ENCODE measurements at regions of chrX and their contacts with region 1.

Region 1: DNA sequence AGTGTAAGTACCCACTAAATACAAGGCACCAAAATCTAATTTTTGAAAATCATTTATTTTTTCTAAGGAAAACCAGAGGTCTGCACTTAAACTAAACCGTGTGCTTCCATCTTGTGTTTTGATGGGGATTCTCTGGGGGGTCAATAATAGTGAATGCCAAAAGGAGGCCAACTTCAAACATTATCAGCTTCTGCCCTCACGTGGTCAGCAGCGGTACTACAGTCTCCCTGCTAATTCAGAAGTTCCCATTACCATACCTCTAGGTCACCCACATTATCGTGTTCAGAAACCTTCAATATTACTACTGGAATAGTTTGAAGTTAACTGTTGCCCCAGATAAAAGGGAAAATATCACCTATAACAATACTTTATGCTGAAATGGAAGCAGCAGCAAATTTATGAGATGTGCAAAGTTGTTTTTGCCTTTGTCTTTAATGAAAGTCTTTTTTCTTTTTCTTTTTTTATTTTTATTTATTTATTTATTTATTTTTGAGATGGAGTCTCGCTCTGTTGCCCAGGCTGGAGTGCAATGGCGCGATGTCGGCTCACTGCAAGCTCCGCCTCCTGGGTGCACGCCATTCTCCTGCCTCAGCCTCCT is 17.3 kb downstream of the CTPS2 start:
- DNase-seq: no peak
- ATAC-seq: peak; percentile 92
- H3K4me3 ChIP-seq: no peak overlapping the region
- H3K27ac ChIP-seq: no peak overlapping the region
- H3K4me1 ChIP-seq: no peaks in the 10 kb centered on the region
- H3K27me3 ChIP-seq: no peaks in the 10 kb centered on the region
- CTCF ChIP-seq: peak; percentile 85 to 92 (median 92)
- EP300 ChIP-seq: no peak
- POLR2A ChIP-seq: no peak
- RAD21 ChIP-seq: peak; percentile 74

Region 2: GRCh38 chrX:15493118-15493962 is 1201.8 kb before region 1 on chrX and contains the start of gene PIR:
- CTCF ChIA-PET with region 1: no interaction called
- POLR2A ChIA-PET with region 1: no interaction called
- RAD21 ChIA-PET with region 1: no interaction called
- SMC1A ChIA-PET with region 1: no interaction called
- in situ Hi-C with region 1: no loop called
- intact Hi-C with region 1: loop called (anchors 5 kb)
- DNase-seq: peak; percentile 17
- ATAC-seq: peak; percentile 97
- H3K4me3 ChIP-seq: peak within 1 kb of the TSS; percentile 48
- H3K27ac ChIP-seq: peak within 1 kb of the TSS; percentile 52
- H3K4me1 ChIP-seq: no peaks in the 10 kb centered on the region
- H3K27me3 ChIP-seq: no peaks in the 10 kb centered on the region
- CTCF ChIP-seq: peak; percentile 31 to 41 (median 38); a peak in 4 of 6 replicates
- EP300 ChIP-seq: no peak
- POLR2A ChIP-seq: peak; percentile 68
- RAD21 ChIP-seq: no peak
- polyA plus RNA-seq, gene PIR: 10.4 to 10.9 TPM

Region 3: GRCh38 chrX:15680401-15680800 is 1014.8 kb before region 1 on chrX:
- CTCF ChIA-PET with region 1: no interaction called
- POLR2A ChIA-PET with region 1: no interaction called
- RAD21 ChIA-PET with region 1: no interaction called
- SMC1A ChIA-PET with region 1: no interaction called
- in situ Hi-C with region 1: loop called (anchors 10 kb)
- intact Hi-C with region 1: loop called (anchors 5 kb)
- DNase-seq: no peak
- ATAC-seq: peak; percentile 79
- H3K4me3 ChIP-seq: no peak overlapping the region
- H3K27ac ChIP-seq: peak overlapping the region; percentile 11; the same call in 1 of the 2 replicates
- H3K4me1 ChIP-seq: peaks cover 20% of the 10 kb centered on the region
- H3K27me3 ChIP-seq: no peaks in the 10 kb centered on the region
- CTCF ChIP-seq: no peak
- EP300 ChIP-seq: no peak
- POLR2A ChIP-seq: no peak
- RAD21 ChIP-seq: no peak

Region 4: DNA sequence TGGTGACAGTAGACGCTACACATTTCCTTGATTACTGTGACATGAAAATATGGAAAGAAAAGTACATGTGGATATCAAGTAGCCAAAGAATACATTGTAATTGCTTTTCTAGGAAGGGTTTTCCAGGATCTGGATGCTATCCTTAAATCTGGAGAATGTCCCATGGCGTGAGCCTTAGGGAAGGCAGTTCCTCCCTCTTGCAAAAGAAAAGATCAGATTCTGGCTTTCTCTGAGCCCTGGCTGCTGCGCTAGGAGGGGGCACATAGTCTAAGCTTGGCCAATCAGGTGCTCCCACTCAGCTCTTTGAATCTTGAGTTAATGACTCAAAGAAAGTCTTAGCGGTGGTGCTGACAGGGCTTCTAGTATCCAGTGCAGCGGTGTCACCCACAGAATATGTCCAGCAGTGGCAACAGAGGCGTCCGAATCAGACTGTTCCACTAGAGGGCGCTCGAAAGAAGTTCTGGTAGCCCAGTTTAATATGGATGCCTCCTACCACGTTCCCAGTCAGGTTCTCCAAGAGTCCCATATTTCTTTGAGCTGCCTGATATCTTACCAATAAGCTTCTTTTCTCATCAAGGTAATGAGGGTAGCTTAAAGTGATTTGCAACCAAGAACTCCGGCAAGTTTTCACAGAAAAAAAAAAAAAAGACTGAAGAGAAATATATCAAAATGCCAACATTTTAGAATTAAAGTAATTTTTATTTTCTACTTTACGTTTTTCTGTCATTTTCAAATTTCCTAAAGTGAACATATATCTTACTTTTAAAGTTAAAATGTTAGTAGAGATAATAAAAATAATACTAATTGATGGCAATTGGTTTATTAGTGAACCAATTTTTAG is 258.6 kb before region 1 on chrX:
- CTCF ChIA-PET with region 1: interaction called, 3 read pairs
- POLR2A ChIA-PET with region 1: no interaction called
- RAD21 ChIA-PET with region 1: interaction called, 3 read pairs
- SMC1A ChIA-PET with region 1: no interaction called
- in situ Hi-C with region 1: no loop called
- intact Hi-C with region 1: loop called (anchors 1 kb)
- DNase-seq: peak; percentile 5
- ATAC-seq: peak; percentile 94
- H3K4me3 ChIP-seq: no peak overlapping the region
- H3K27ac ChIP-seq: no peak overlapping the region
- H3K4me1 ChIP-seq: no peaks in the 10 kb centered on the region
- H3K27me3 ChIP-seq: no peaks in the 10 kb centered on the region; a peak in 1 of 4 replicates
- CTCF ChIP-seq: peak; percentile 61 to 67 (median 63)
- EP300 ChIP-seq: no peak
- POLR2A ChIP-seq: no peak
- RAD21 ChIP-seq: no peak; the same call in 1 of the 2 replicates

Region 5: GRCh38 chrX:16560173-16560572 is 135.0 kb before region 1 on chrX:
- CTCF ChIA-PET with region 1: no interaction called
- POLR2A ChIA-PET with region 1: no interaction called
- RAD21 ChIA-PET with region 1: no interaction called
- SMC1A ChIA-PET with region 1: no interaction called
- in situ Hi-C with region 1: no loop called
- intact Hi-C with region 1: no loop called
- DNase-seq: no peak
- ATAC-seq: no peak
- H3K4me3 ChIP-seq: no peak overlapping the region
- H3K27ac ChIP-seq: no peak overlapping the region
- H3K4me1 ChIP-seq: no peaks in the 10 kb centered on the region
- H3K27me3 ChIP-seq: no peaks in the 10 kb centered on the region; a peak in 1 of 4 replicates
- CTCF ChIP-seq: no peak
- EP300 ChIP-seq: no peak
- POLR2A ChIP-seq: no peak
- RAD21 ChIP-seq: no peak

Region 6: DNA sequence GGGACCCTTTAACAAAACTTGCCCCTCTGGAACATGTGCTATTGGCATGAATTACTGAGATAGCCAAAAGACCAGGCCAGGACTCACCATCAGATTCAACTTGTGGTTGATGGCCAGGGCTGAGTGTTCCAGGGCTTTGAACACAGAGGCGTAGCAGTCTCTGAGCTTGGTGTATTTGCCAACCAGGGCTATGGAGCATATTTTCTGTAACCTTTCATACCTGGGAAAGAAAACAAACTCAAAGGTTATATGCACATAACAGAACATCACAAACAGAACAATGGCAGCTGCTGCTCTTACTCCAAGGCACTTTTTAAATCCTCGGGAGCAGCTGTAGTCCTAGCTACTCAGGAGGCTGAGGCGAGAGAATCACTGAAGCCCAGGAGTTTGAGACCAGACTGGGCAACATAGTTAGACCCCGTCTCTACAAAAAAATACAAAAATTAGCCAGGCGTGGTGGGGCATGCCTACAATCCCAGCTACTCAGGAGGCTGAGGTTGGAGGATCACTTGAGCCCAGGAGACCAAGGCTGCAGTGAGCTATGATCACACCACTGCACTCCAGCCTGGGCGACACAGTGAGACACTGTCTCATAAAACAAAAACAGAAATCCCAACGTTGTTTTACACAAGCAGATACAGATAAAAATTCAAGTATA is 12.0 kb before region 1 on chrX:
- CTCF ChIA-PET with region 1: interaction called, 19 read pairs
- POLR2A ChIA-PET with region 1: interaction called, 3 read pairs
- RAD21 ChIA-PET with region 1: no interaction called
- SMC1A ChIA-PET with region 1: interaction called, 4 read pairs
- in situ Hi-C with region 1: no loop called
- intact Hi-C with region 1: no loop called
- DNase-seq: no peak
- ATAC-seq: no peak
- H3K4me3 ChIP-seq: no peak overlapping the region
- H3K27ac ChIP-seq: no peak overlapping the region
- H3K4me1 ChIP-seq: no peaks in the 10 kb centered on the region
- H3K27me3 ChIP-seq: no peaks in the 10 kb centered on the region; a peak in 1 of 4 replicates
- CTCF ChIP-seq: no peak
- EP300 ChIP-seq: no peak
- POLR2A ChIP-seq: no peak
- RAD21 ChIP-seq: no peak